ENCODE measurements at regions of chr4 and their contacts with region 1.

Region 1: DNA sequence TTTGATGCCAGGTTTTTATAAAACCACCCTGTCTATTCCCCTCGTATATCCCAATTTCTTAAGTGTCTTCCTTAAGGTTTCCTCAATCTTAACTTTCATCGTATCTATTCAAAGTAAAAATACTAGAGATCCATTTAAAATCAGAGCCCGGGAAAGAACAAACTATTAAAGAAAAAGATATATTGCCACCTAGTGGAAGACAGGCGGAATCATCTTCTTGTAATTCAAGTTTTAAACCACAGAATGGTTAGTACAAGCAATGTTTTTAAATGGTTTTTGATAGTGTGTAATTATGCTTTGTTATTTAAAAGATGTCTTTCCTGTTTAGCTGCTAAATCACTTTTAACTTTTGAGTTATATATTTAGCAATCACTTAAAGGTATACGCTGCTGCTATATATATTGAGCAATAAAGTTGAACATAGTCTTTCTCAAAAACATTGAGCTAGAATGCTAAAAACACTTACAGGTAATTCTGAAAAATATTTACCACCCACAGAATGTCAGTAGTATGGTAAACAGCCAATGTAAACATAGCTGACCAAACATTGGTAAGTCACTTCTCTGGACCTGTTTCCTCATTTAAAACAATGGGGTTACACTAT is 18.2 kb downstream of the PRDM8 start:
- DNase-seq: no peak
- H3K4me3 ChIP-seq: no peak overlapping the region
- H3K27ac ChIP-seq: no peak overlapping the region
- H3K4me1 ChIP-seq: no peaks in the 10 kb centered on the region
- H3K27me3 ChIP-seq: peaks cover 8% of the 10 kb centered on the region
- CTCF ChIP-seq: peak; percentile 53 to 81 (median 68)
- POLR2A ChIP-seq: no peak

Region 2: GRCh38 chr4:78951862-78952472 is 1263.6 kb before region 1 on chr4:
- intact Hi-C with region 1: loop called in 1 of 2 experiments (anchors 10 kb)
- DNase-seq: peak in 3 of 7 donors; percentile 20 to 32 (median 29)
- H3K4me3 ChIP-seq: no peak overlapping the region
- H3K27ac ChIP-seq: no peak overlapping the region
- H3K4me1 ChIP-seq: no peaks in the 10 kb centered on the region
- H3K27me3 ChIP-seq: no peaks in the 10 kb centered on the region
- CTCF ChIP-seq: peak; percentile 50 to 82 (median 71)
- POLR2A ChIP-seq: no peak

Region 3: GRCh38 chr4:81003597-81004111 is 788.1 kb after region 1 on chr4:
- intact Hi-C with region 1: no loop called
- DNase-seq: no peak
- H3K4me3 ChIP-seq: no peak overlapping the region
- H3K27ac ChIP-seq: no peak overlapping the region
- H3K4me1 ChIP-seq: no peaks in the 10 kb centered on the region
- H3K27me3 ChIP-seq: no peaks in the 10 kb centered on the region
- CTCF ChIP-seq: no peak
- POLR2A ChIP-seq: no peak

Measured in adrenal gland (tissue), 19 donors.